ENCODE measurements at regions of chr1 and their contacts with region 1.

Region 1: DNA sequence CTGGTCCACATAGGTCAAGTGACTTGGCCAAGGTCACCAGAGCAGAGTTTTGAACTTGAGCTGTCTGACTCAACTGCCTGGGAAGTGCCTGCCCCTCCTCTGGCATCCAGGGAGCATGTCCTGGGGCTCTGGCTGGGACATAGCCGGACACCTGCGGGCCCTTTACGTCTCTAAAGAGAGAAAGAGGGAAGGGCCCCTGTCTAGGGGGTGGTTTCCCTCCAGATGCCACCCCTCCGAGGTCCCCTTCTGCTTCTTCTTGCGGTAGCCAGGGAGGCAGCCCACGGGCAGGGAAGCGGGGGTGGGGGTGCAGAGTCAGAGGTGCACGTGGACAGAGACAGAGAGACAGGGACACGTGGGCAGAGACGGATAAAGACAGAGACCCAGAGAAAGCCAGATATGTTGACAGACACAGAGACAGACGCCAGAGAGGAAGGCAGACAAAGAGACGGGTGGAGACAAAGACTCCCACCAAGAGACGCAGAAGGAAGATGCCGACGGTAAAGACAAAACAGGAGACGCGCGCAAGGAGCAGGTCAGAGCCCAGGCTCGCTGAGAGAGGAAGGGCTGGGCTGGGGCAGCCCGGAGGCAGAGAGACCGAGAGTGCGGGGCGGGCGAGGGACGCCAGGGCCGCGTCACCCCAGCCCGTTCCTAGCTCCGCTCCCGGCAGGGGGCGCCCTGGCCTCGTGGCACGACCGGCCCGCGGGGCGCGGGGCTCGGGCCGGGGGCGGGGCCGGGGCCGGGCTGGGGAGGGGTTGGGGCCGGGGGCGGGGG is 458 bp upstream of the ALPL start:
- DNase-seq: no peak
- ATAC-seq: peak in 1 of 2 donors; percentile 34
- H3K4me3 ChIP-seq: peak overlapping the region in 1 of 4 donors; percentile 21
- H3K27ac ChIP-seq: no peak overlapping the region
- H3K4me1 ChIP-seq: peaks cover 0 to 7% of the 10 kb centered on the region in 2 donors
- H3K27me3 ChIP-seq: peaks cover 18 to 47% (median 33%) of the 10 kb centered on the region in 3 donors
- CTCF ChIP-seq: peak in 4 of 5 experiments; percentile 22 to 57 (median 50)
- POLR2A ChIP-seq: no peak

Region 2: DNA sequence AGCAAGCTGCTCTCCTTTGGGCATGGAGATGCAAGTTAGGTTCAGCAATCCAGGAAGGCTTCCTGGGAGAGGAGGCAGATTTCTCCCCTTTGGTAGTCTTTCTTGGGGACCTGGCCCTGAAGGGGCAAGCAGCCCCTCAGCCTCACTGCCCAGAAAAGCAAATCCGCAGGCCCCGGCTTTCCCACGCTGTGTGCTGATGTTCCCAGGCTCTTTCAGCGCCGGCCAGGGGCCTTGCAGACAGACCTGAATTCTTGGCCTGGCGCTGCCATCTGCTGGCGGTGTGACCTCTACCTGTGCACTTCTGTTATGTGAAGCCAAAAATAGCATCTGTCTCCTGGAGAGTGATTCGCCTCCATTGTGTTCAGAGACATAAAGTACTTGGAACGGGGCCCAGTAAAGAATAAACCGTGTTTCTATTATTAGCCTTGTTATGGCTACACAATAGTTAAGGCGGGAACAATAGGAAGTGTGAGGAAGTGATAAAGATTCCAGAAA is 65.3 kb after region 1 on chr1:
- in situ Hi-C with region 1: no loop called
- intact Hi-C with region 1: loop called (anchors 1 kb)
- DNase-seq: peak; percentile 12 to 44
- ATAC-seq: peak; percentile 88 to 92
- H3K4me3 ChIP-seq: no peak overlapping the region
- H3K27ac ChIP-seq: peak overlapping the region; percentile 59 to 78 (median 71)
- H3K4me1 ChIP-seq: peaks cover 8% of the 10 kb centered on the region in 2 donors
- H3K27me3 ChIP-seq: no peaks in the 10 kb centered on the region
- CTCF ChIP-seq: peak; percentile 17 to 48 (median 36)
- POLR2A ChIP-seq: no peak

Region 3: DNA sequence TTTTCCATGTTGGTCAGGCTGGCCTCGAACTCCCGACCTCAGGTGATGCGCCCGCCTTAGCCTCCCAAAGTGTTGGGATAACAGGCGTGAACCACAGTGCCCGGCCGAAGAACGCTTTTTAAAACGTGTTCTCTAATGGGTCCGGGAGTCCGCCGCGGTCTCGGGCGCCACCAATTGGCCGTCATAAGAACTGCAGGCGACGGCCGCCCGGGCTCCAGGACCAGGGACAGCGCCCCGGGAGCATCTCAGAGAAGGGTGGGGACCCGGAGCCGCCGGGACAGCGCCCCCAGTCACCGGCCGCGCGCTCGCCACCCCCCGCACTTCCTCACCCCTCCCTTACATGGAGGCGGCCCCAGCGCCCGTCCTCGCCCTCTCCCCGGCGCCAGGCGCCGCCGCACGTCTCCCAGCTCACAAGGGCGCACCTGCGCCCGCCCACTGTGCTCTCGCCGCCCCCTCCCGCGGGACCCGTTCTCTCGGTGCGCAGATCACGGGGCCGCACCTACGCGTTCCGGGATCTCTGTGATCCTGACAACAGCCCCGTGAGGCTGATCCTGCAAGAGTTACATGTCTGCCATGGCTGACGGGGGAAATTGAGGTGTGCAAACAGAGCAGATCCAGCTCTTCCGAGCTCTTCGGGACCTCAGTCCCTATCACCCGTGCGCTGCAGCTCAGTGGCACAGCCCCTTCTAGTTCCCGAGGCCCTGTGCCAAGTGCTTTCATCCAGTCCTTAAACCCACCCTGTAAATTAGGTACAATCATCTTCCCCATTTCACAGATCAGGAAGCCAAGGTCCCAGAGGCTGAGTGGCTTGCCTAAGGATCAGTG is 150.5 kb after region 1 on chr1:
- in situ Hi-C with region 1: no loop called
- intact Hi-C with region 1: loop called (anchors 2 kb)
- DNase-seq: peak; percentile 20 to 27
- ATAC-seq: peak in 1 of 2 donors; percentile 53
- H3K4me3 ChIP-seq: no peak overlapping the region
- H3K27ac ChIP-seq: no peak overlapping the region
- H3K4me1 ChIP-seq: no peaks in the 10 kb centered on the region
- H3K27me3 ChIP-seq: peaks cover 5 to 16% (median 13%) of the 10 kb centered on the region in 3 donors
- CTCF ChIP-seq: peak; percentile 71 to 86 (median 85)
- POLR2A ChIP-seq: no peak